Adrenal gland (tissue), 19 donors: ENCODE measurements at regions of chr7 and their contacts with region 1.

Region 1: DNA sequence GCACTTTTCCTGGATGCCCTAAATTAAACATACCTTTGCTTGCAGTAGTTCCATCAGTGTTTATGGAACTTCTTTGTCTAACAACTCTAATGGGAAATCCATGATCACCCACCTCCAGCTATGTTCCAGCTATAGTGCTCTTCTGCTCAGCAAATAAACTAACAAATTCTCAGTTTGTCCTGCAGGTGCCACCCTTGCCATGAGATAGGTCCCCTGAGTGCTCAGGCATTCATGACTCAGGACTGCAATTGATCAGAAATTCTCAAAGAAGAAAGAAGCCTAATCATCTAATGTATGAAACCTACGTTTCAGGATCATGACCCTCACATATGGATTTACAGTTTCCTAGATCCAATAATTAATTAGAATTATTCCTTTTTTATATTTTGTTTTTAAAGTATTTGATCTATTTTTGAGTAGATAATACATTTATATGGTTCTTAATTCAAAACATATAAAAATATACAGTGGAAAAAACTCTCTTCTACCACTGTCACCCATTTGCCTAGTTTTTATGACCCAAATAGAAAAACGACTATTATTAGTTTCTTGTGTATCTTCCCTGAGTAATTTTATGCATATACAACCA is 48.7 kb upstream of the DYNC1I1 start:
- DNase-seq: peak; percentile 56 to 77 (median 65)
- H3K4me3 ChIP-seq: no peak overlapping the region
- H3K27ac ChIP-seq: no peak overlapping the region
- H3K4me1 ChIP-seq: no peaks in the 10 kb centered on the region
- H3K27me3 ChIP-seq: peaks cover 11% of the 10 kb centered on the region
- CTCF ChIP-seq: peak; percentile 41 to 83 (median 76)
- POLR2A ChIP-seq: no peak

Region 2: DNA sequence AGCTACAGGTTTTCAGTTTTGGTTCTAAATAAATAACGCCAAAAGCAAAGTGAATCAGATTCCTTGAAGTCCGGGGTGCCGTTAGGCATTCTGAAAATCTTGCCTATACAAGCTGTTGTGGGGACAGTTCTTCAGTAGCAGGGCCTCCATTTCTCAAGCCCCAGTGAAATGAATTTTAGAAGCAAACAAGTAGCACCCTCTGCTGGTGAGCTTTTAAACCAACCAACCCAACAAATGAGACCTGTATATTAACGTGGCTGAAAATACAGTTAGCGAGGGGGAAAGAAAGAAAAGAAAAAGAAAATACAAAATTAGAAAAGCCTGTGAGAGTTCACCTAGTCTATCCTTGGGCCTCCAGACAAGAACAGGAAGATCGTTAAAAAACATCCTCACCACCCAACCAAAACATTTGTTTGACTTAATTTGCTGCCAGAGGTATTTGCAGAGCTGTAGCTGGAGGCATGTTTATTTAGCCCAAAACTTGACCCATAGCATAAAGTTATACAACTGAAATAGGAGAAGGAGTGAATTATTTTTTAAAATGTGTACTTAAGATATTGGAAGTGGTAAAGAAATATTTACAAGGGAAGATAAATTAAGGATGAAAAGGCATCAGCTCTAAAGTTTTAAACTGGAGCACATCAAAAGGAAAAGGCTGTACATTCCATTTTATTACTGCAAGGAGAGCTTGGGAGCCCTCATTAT is 147.5 kb after region 1 on chr7:
- intact Hi-C with region 1: loop called (anchors 5 kb)
- DNase-seq: peak; percentile 23 to 64 (median 39)
- H3K4me3 ChIP-seq: no peak overlapping the region
- H3K27ac ChIP-seq: no peak overlapping the region
- H3K4me1 ChIP-seq: no peaks in the 10 kb centered on the region
- H3K27me3 ChIP-seq: no peaks in the 10 kb centered on the region
- CTCF ChIP-seq: peak; percentile 56 to 79 (median 76)
- POLR2A ChIP-seq: no peak